T-cell (primary cell): ENCODE measurements at regions of chr21 and their contacts with region 1.

Region 1: GRCh38 chr21:39313571-39314142 is at the start of gene BRWD1:
- DNase-seq: peak; percentile 46 to 89 (median 71)
- ATAC-seq: peak; percentile 49 to 61 (median 59)
- H3K4me3 ChIP-seq: peak within 1 kb of the TSS; percentile 82 to 83
- H3K4me3 Mint-ChIP-seq: peak within 1 kb of the TSS; percentile 88 to 90 (median 90)
- H3K27ac ChIP-seq: peak within 1 kb of the TSS; percentile 50
- H3K27ac Mint-ChIP-seq: peak within 1 kb of the TSS; percentile 91 to 96
- H3K4me1 ChIP-seq: peaks cover 13 to 24% of the 10 kb centered on the region in 2 experiments
- H3K4me1 Mint-ChIP-seq: peaks cover 44 to 56% (median 54%) of the 10 kb centered on the region in 3 donors
- H3K27me3 ChIP-seq: no peaks in the 10 kb centered on the region
- H3K27me3 Mint-ChIP-seq: no peaks in the 10 kb centered on the region
- total RNA-seq, gene BRWD1: 70.2 to 86.3 (median 75.2) TPM

Region 2: DNA sequence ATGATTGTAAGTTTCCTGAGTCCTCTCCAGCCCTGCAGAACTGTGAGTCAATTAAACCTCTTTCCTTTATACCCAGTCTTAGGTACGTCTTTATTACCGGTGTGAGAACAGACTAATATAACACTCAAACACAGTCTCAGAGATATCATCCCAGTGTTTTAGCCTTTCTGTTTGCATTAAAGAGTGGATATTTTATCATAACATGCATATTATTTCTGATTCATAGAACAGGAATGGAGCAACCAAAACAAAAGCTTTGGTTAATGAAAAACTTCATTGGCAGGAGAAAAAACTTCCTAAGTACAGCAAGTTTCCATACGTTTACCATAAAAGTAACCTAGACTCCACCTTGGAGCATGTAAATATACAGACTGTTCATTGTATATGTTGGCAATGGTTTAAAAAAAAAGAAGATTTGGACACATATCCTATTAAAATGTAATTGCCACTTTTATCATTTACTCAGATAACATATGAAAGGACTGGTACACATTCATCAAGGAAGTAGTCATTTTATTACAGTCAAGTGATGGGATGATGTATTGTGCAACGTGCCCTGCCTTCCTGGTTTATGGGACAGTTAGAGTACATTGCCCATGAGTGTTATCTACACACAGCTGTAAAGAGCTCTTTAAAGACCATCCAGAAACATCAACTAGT is 363.1 kb before region 1 on chr21:
- CTCF ChIA-PET with region 1: no interaction called
- POLR2A ChIA-PET with region 1: no interaction called
- DNase-seq: no peak
- ATAC-seq: no peak
- H3K4me3 ChIP-seq: no peak overlapping the region
- H3K4me3 Mint-ChIP-seq: no peak overlapping the region
- H3K27ac ChIP-seq: no peak overlapping the region
- H3K27ac Mint-ChIP-seq: no peak overlapping the region
- H3K4me1 ChIP-seq: no peaks in the 10 kb centered on the region
- H3K4me1 Mint-ChIP-seq: no peaks in the 10 kb centered on the region
- H3K27me3 ChIP-seq: peaks cover 0 to 16% of the 10 kb centered on the region in 2 experiments
- H3K27me3 Mint-ChIP-seq: peaks cover 7 to 8% of the 10 kb centered on the region in 2 donors

Region 3: GRCh38 chr21:39125752-39126485 is 187.7 kb before region 1 on chr21:
- CTCF ChIA-PET with region 1: no interaction called
- POLR2A ChIA-PET with region 1: no interaction called
- DNase-seq: peak in 1 of 35 experiments; percentile 15
- ATAC-seq: no peak
- H3K4me3 ChIP-seq: no peak overlapping the region
- H3K4me3 Mint-ChIP-seq: no peak overlapping the region
- H3K27ac ChIP-seq: no peak overlapping the region
- H3K27ac Mint-ChIP-seq: no peak overlapping the region
- H3K4me1 ChIP-seq: peaks cover 0 to 4% of the 10 kb centered on the region in 2 experiments
- H3K4me1 Mint-ChIP-seq: peaks cover 0 to 6% (median 4%) of the 10 kb centered on the region in 3 donors
- H3K27me3 ChIP-seq: peaks cover 0 to under 1% of the 10 kb centered on the region in 2 experiments
- H3K27me3 Mint-ChIP-seq: peaks cover 0 to 3% of the 10 kb centered on the region in 2 donors

Region 4: DNA sequence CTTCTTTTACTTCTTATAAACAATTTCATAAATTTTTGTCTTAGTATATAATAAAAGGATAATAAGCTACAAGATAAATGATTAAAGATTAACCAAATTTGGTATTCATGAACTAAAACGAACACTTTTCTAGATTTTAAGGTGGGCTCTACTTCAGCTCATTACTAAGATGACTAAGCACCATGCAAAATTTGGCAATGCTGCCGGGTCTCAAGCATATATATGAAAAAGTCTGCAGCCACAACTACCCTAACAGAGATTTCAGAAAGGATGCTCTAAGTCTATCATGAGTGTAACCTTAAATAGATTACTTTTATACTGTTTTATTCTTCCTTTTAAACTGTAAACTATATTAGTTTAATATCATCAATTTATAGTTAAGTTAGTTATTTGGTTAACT is 48.1 kb before region 1 on chr21:
- CTCF ChIA-PET with region 1: no interaction called
- POLR2A ChIA-PET with region 1: interaction called in 1 of 2 experiments, 10 read pairs
- DNase-seq: no peak
- ATAC-seq: no peak
- H3K4me3 ChIP-seq: no peak overlapping the region
- H3K4me3 Mint-ChIP-seq: no peak overlapping the region
- H3K27ac ChIP-seq: no peak overlapping the region
- H3K27ac Mint-ChIP-seq: no peak overlapping the region
- H3K4me1 ChIP-seq: no peaks in the 10 kb centered on the region
- H3K4me1 Mint-ChIP-seq: peaks cover 4 to 16% (median 12%) of the 10 kb centered on the region in 3 donors
- H3K27me3 ChIP-seq: no peaks in the 10 kb centered on the region
- H3K27me3 Mint-ChIP-seq: no peaks in the 10 kb centered on the region

Region 5: DNA sequence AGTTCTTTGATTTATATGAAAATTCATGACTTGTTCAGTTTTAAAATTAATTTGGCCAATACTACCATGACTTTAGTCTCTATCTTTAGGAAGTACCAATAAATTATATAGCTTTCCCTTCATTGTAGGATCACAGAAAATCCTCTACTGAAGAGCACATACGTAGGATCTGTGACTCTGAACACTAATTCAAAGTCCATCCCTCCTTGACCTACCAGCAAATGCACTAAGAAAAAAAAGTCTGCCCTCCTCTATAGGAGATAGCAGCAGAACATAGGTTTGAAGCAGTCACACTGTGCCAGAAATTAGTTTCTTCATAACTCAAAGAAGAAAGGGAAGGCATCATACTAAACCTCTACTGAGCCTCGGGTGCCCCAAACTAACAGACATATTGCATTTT is 16.8 kb before region 1 on chr21:
- CTCF ChIA-PET with region 1: interaction called, 3 to 7 read pairs
- POLR2A ChIA-PET with region 1: interaction called, 4 to 15 read pairs
- DNase-seq: no peak
- ATAC-seq: no peak
- H3K4me3 ChIP-seq: no peak overlapping the region
- H3K4me3 Mint-ChIP-seq: no peak overlapping the region
- H3K27ac ChIP-seq: no peak overlapping the region
- H3K27ac Mint-ChIP-seq: no peak overlapping the region
- H3K4me1 ChIP-seq: peaks cover 0 to 5% of the 10 kb centered on the region in 2 experiments
- H3K4me1 Mint-ChIP-seq: peaks cover 37 to 42% (median 38%) of the 10 kb centered on the region in 3 donors
- H3K27me3 ChIP-seq: no peaks in the 10 kb centered on the region
- H3K27me3 Mint-ChIP-seq: no peaks in the 10 kb centered on the region

Region 6: GRCh38 chr21:39379986-39380891 is 66.6 kb after region 1 on chr21:
- CTCF ChIA-PET with region 1: no interaction called
- POLR2A ChIA-PET with region 1: interaction called, 3 to 15 read pairs
- DNase-seq: peak; percentile 62 to 92 (median 82)
- ATAC-seq: peak; percentile 97 to 99 (median 98)
- H3K4me3 ChIP-seq: peak overlapping the region; percentile 68 to 92
- H3K4me3 Mint-ChIP-seq: peak overlapping the region; percentile 91 to 92 (median 92)
- H3K27ac ChIP-seq: peak overlapping the region; percentile 57
- H3K27ac Mint-ChIP-seq: peak overlapping the region; percentile 90 to 91
- H3K4me1 ChIP-seq: peaks cover 6 to 9% of the 10 kb centered on the region in 2 experiments
- H3K4me1 Mint-ChIP-seq: peaks cover 18 to 28% (median 24%) of the 10 kb centered on the region in 3 donors
- H3K27me3 ChIP-seq: peaks cover 0 to 11% of the 10 kb centered on the region in 2 experiments
- H3K27me3 Mint-ChIP-seq: peaks cover 6 to 11% of the 10 kb centered on the region in 2 donors

Region 7: GRCh38 chr21:39388038-39388810 is 74.6 kb after region 1 on chr21:
- CTCF ChIA-PET with region 1: interaction called in 1 of 2 experiments, 12 read pairs
- POLR2A ChIA-PET with region 1: interaction called in 1 of 2 experiments, 6 read pairs
- DNase-seq: peak; percentile 53 to 92 (median 82)
- ATAC-seq: peak; percentile 80 to 82 (median 81)
- H3K4me3 ChIP-seq: peak overlapping the region; percentile 53 to 67
- H3K4me3 Mint-ChIP-seq: peak overlapping the region; percentile 81 to 85 (median 84)
- H3K27ac ChIP-seq: peak overlapping the region; percentile 60
- H3K27ac Mint-ChIP-seq: peak overlapping the region; percentile 87 to 94
- H3K4me1 ChIP-seq: peaks cover 14 to 33% of the 10 kb centered on the region in 2 experiments
- H3K4me1 Mint-ChIP-seq: peaks cover 28 to 37% (median 32%) of the 10 kb centered on the region in 3 donors
- H3K27me3 ChIP-seq: no peaks in the 10 kb centered on the region
- H3K27me3 Mint-ChIP-seq: no peaks in the 10 kb centered on the region